Prostate gland (tissue), 2 donors: ENCODE measurements at regions of chr6 and their contacts with region 1.

Region 1: DNA sequence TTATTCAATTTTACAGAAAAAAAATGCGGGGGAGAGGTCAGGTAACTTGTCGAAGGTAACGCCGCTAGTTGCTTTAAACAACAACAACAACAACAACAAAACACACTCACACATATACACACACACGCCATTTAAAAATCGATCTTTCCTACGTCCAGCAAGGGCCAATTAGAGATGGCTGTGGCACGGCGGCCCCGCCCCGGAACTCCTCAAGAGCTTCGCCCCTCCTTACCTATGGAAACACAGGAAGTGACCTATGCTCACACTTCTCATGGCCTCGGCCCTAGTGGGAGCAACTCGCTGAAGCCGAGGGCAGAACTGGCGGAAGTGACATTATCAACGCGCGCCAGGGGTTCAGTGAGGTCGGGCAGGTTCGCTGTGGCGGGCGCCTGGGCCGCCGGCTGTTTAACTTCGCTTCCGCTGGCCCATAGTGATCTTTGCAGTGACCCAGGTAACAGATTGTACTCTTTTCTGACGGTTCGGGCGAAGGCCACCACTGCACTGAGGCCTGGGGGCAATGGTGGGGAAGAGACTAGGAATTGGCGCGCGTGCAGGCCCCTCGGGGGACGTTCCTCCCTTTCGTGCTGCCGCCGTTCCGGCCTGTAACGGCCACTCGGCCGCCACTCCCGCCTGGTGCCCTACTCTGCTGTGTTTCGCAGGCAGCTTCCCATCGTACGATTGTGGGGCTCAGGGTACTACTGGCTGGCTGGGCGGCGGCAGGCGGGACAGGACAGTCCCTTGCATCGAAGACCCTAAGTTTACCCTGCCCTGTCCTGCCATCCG is at the start of gene TBP:
- DNase-seq: peak; percentile 98
- H3K4me3 ChIP-seq: peak within 1 kb of the TSS; percentile 93 to 96
- H3K27ac ChIP-seq: peak within 1 kb of the TSS; percentile 91 to 92
- H3K4me1 ChIP-seq: peaks cover 27% of the 10 kb centered on the region
- H3K27me3 ChIP-seq: no peaks in the 10 kb centered on the region
- CTCF ChIP-seq: peak in 2 of 4 experiments; percentile 16 to 27
- POLR2A ChIP-seq: peak; percentile 38
- total RNA-seq, gene TBP: 19.6 to 36.9 TPM

Region 2: DNA sequence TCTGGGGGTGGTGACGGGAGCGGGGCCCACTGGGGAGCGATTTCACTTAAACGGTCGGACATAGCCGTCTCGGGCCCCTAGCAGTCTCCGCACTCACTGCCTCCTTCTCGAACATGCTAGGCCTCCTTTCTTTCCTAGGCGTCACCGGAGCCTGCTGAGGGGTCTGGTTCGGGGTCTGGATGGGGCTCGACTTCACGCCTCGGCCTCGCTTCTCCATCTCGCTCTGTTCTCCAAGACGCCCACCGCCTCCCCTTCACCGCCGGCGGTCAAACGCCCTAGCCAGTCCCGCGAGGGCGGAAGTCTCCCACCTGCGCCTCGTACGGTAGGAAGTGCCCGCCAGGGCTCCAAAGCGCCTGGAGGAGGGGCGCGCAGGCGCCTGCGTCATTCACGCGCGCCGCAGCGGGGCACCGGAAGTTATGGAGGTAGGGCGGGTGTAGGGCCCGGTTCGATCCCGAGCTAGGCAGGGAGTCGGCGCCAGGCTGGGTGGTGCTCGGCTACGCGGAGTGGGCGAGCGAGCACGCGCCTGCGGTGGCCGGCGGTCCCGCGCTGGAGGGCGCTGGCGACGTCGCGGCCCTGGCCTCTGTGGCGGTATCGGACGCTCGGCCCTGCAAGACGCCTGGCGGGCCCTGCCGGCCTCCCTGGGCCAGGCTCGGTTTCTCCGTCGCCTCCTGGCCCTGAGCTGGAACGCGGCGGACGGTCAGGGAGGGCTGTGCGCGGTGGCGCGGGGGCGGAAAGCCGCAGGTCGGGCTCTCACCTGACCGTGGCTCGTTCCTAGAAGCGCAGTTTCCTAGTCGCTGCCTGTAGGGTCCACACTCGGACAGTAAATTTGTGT is 802.7 kb before region 1 on chr6 and contains the starts of genes DYNLT2 and ERMARD:
- intact Hi-C with region 1: loop called (anchors 2 kb)
- DNase-seq: peak; percentile 92
- H3K4me3 ChIP-seq: peak within 1 kb of the TSS; percentile 87 to 90
- H3K27ac ChIP-seq: peak within 1 kb of the TSS; percentile 95 to 96
- H3K4me1 ChIP-seq: peaks cover 4% of the 10 kb centered on the region
- H3K27me3 ChIP-seq: no peaks in the 10 kb centered on the region
- CTCF ChIP-seq: peak in 3 of 4 experiments; percentile 26 to 78 (median 58)
- POLR2A ChIP-seq: no peak
- total RNA-seq, gene DYNLT2: 2.2 to 7.2 TPM
- total RNA-seq, gene ERMARD: 23.7 to 33.2 TPM

Region 3: GRCh38 chr6:170271771-170272314 is 282.4 kb before region 1 on chr6:
- intact Hi-C with region 1: no loop called
- DNase-seq: no peak
- H3K4me3 ChIP-seq: no peak overlapping the region
- H3K27ac ChIP-seq: no peak overlapping the region
- H3K4me1 ChIP-seq: no peaks in the 10 kb centered on the region
- H3K27me3 ChIP-seq: no peaks in the 10 kb centered on the region
- CTCF ChIP-seq: no peak
- POLR2A ChIP-seq: no peak

Region 4: DNA sequence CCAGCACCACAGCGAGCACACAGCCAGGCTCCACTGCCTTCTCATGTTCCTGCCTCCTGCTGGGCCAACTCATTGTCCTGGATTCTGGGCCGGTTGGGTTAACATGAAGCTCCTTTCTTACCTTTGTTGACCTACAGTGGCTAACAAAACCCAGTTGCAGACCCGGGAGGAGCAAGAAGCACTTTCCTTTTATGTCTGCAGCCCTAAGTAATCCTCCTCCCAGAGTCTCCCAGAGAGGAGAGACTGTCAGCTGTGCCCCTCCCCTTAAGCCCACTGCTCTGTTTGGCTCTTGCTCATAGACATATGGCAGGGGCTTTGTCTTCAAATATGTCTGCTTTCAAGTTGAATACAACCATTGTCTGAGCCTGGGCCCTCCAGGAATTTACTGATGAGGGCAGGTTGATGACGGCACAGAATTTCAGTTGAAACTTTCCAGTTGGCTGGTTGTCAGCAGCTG is 56.3 kb before region 1 on chr6:
- intact Hi-C with region 1: no loop called
- DNase-seq: no peak
- H3K4me3 ChIP-seq: no peak overlapping the region
- H3K27ac ChIP-seq: no peak overlapping the region
- H3K4me1 ChIP-seq: no peaks in the 10 kb centered on the region
- H3K27me3 ChIP-seq: peaks cover 2% of the 10 kb centered on the region
- CTCF ChIP-seq: no peak
- POLR2A ChIP-seq: no peak